B cell (primary cell): ENCODE measurements at regions of chr1 and their contacts with region 1.

Region 1: GRCh38 chr1:41038105-41038504 is 16.6 kb upstream of the SLFNL1 start:
- DNase-seq: no peak
- ATAC-seq: no peak
- H3K4me3 ChIP-seq: no peak overlapping the region
- H3K4me3 Mint-ChIP-seq: no peak overlapping the region
- H3K27ac ChIP-seq: no peak overlapping the region
- H3K27ac Mint-ChIP-seq: no peak overlapping the region
- H3K4me1 ChIP-seq: no peaks in the 10 kb centered on the region
- H3K4me1 Mint-ChIP-seq: no peaks in the 10 kb centered on the region
- H3K27me3 ChIP-seq: no peaks in the 10 kb centered on the region
- H3K27me3 Mint-ChIP-seq: no peaks in the 10 kb centered on the region
- CTCF ChIP-seq: no peak

Region 2: DNA sequence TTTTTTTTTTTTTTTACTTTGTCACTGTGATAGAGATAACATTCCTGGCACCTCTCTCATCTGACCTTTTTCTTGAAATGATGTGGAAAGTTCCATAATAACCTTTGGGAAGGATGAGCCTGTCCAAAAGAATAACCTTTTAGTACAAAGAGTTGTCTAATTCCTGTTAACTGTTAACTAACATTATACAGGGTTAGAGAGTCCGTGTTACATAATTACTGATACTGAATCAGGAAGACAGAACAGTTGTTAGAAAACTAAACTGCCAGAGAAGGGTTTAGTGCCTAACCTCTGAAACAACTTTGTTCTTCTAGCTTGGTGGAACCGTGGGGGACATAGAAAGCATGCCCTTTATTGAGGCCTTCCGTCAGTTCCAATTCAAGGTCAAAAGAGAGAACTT is 49.8 kb before region 1 on chr1:
- CTCF ChIA-PET with region 1: no interaction called
- POLR2A ChIA-PET with region 1: interaction called, 13 read pairs
- intact Hi-C with region 1: no loop called
- DNase-seq: no peak
- ATAC-seq: no peak
- H3K4me3 ChIP-seq: no peak overlapping the region
- H3K4me3 Mint-ChIP-seq: no peak overlapping the region
- H3K27ac ChIP-seq: no peak overlapping the region
- H3K27ac Mint-ChIP-seq: no peak overlapping the region
- H3K4me1 ChIP-seq: no peaks in the 10 kb centered on the region
- H3K4me1 Mint-ChIP-seq: no peaks in the 10 kb centered on the region
- H3K27me3 ChIP-seq: no peaks in the 10 kb centered on the region
- H3K27me3 Mint-ChIP-seq: no peaks in the 10 kb centered on the region
- CTCF ChIP-seq: no peak